GM10248 (cell line): ENCODE measurements at regions of chr5 and their contacts with region 1.

Region 1: DNA sequence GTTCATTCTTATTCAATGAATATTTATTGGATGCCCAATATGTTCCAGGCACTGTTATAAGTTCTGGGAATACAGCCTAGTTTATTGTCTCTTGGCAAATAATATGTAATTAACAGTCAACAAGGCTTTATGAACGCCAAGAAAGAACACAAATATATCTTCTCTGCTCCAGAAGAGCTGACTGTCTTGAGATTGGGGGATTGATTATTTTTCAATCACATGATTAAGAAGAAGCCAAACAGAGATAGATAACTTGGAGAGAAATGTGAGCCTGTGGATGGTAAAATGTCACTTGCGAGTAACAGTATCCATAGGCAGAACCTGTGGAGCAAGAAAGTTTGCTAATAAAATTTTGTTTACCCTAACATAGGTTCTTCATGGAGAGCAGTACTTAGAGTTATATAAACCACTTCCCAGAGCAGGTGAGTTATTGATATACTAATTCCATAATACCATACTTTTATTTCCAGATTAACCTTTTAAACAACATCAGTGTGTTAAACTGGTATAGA is 49.4 kb downstream of the HSD17B4 start:
- DNase-seq: no peak
- CTCF ChIP-seq: no peak

Region 2: DNA sequence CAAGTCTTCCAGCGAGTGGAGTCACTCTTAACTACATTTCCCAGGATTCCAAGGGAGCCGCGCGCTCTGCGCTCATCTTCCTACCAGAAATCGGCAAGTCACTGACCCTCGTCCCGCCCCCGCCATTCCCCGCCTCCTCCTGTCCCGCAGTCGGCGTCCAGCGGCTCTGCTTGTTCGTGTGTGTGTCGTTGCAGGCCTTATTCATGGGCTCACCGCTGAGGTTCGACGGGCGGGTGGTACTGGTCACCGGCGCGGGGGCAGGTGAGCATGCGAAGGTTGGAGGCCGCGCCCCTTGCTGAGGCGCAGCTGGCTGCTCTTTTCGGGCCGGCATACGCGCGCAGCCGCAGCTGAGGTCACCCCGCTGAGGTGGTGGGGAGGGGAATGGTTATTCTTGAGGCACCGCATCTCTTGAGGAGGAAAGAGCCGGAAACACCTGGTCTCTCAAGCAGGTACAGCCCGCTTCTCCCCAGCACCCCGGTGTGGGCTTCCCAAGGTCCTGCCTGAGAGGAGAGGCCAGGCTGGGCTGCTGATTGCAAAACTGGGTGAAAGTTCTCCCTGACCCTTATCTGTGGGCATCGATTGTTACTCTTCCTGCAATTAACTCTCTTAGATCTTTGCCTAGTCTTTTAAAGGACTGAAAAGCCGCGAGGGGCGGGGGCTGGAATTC is 49.2 kb before region 1 on chr5 and contains the start of gene HSD17B4:
- CTCF ChIA-PET with region 1: no interaction called
- POLR2A ChIA-PET with region 1: no interaction called
- DNase-seq: peak; percentile 84
- CTCF ChIP-seq: no peak

Region 3: GRCh38 chr5:119483155-119483554 is 18.6 kb before region 1 on chr5:
- CTCF ChIA-PET with region 1: interaction called, 12 read pairs
- POLR2A ChIA-PET with region 1: no interaction called
- DNase-seq: no peak
- CTCF ChIP-seq: no peak